Lower leg skin (tissue), 4 donors: ENCODE measurements at regions of chr2 and their contacts with region 1.

Region 1: DNA sequence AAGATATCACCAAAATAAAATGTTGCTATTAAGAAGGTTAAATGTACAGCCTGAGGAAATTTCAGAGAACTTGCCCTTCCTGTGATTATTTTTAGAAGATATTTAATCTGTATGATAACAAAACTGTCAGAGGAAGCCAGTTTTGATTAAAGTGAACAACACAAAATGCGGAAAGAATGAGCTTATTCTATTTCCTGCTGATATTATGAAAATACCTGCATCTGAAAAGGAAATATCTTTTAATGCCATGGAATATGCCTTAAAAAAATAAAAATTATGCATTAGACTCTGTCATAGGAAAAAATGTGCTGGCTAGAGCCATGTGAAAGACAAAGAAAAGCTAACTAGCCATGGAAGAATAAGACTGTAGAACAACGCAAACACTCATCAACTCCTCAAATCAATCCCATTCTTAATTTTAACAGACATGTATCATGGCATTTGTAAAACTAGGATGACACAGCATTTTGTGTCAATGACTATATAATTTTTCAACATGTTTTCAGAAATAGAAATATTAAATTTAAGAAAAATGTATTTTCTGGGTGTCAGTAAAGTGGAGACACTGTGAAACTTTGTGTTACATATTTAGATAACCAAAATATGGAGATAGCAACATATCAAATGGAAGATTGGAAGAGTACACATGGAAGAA is 1768.2 kb downstream of the SUCLG1 start:
- DNase-seq: no peak
- H3K4me3 ChIP-seq: no peak overlapping the region
- CTCF ChIP-seq: no peak
- POLR2A ChIP-seq: no peak

Region 2: DNA sequence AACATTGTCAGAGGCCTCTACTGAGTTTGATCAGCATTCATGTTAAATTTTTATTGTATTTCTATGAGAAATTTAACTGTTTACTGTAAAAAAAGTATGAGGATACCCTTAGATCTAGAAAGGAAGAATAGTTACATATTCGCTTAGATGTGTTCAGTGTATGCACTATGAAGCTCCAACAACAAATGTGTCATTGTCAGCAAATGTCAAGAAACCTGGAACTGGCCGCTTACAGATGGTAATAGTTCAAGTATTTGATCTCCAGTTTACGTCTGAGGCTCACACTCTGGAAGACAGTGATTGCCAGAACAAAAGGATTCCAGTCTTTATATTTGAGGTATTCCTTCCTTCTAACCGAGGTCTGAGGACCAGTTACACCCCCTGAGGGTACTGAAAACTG is 1465.1 kb before region 1 on chr2:
- intact Hi-C with region 1: loop called (anchors 5 kb)
- DNase-seq: no peak
- H3K4me3 ChIP-seq: no peak overlapping the region
- CTCF ChIP-seq: no peak
- POLR2A ChIP-seq: no peak

Region 3: GRCh38 chr2:82728090-82728489 is 37.2 kb after region 1 on chr2:
- intact Hi-C with region 1: loop called (anchors 1 kb)
- DNase-seq: no peak
- H3K4me3 ChIP-seq: no peak overlapping the region
- CTCF ChIP-seq: no peak
- POLR2A ChIP-seq: no peak